Activated T-helper 1 cell treated with anti-CD3 and anti-CD28 coated beads, Interleukin-12 subunit alpha, Interleukin-12 subunit beta, Interleukin-2, Interleukin-4 antibody, amounts not matched to agents 30 ng/mL and 10 ng/mL and 1 ng/mL, durations not matched to agents 14 hours and 24 hours and 36 hours (primary cell): ENCODE measurements at regions of chr9 and their contacts with region 1.

Region 1: DNA sequence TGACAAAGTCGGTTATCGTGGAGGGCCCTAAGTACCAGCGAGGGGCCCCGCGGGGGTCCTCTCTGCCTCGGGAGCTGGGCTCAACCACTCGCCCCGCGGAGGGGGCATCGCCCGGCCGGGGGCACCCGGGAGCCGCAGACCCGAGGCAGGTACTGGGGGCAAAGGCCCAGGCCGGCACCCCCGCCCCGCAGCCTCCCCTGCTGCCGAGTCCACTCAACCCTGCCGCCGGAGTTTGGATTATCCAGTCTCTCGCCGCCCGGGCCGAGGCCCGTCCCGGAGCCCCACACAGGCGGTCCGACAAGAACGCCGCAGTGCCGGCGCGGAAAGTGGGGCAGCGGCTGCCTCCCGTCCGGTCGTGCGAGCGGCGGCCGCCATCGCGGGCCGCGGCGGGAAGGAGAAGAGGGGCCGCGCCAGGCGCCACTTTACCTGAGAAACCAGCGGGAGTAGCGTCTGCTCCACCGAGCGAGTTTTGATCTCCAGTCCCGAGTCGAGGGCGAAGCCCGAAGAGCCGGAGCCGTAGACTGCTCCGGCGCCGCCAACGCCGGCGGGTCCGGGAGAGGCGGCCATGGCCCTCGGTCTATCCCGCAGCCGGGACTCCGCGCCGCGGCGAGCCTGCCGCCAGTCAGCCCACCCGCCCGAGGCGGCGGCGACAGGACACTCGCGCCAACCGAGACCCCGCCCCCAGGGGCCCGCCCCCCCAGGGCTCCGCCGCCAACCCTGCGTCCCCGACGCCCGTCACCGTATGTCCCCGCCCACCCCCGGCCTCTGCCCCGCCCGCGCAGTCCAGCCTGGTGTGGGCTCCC is at the start of gene CTNNAL1:
- DNase-seq: peak; percentile 82
- H3K4me3 Mint-ChIP-seq: peak within 1 kb of the TSS; percentile 95
- H3K27ac Mint-ChIP-seq: peak within 1 kb of the TSS; percentile 94
- H3K4me1 Mint-ChIP-seq: peaks cover 39% of the 10 kb centered on the region
- H3K27me3 Mint-ChIP-seq: peaks cover 2% of the 10 kb centered on the region
- total RNA-seq, gene CTNNAL1: 24.8 and 25.1 TPM in 2 replicates

Region 2: GRCh38 chr9:108933718-108934322 is 79.3 kb before region 1 on chr9 and contains the start of gene ELP1:
- intact Hi-C with region 1: loop called (anchors 1 kb)
- DNase-seq: peak; percentile 90
- H3K4me3 Mint-ChIP-seq: peak within 1 kb of the TSS; percentile 95
- H3K27ac Mint-ChIP-seq: peak within 1 kb of the TSS; percentile 95
- H3K4me1 Mint-ChIP-seq: peaks cover 23% of the 10 kb centered on the region
- H3K27me3 Mint-ChIP-seq: no peaks in the 10 kb centered on the region
- total RNA-seq, gene ELP1: 31.6 and 35.2 TPM in 2 replicates

Region 3: DNA sequence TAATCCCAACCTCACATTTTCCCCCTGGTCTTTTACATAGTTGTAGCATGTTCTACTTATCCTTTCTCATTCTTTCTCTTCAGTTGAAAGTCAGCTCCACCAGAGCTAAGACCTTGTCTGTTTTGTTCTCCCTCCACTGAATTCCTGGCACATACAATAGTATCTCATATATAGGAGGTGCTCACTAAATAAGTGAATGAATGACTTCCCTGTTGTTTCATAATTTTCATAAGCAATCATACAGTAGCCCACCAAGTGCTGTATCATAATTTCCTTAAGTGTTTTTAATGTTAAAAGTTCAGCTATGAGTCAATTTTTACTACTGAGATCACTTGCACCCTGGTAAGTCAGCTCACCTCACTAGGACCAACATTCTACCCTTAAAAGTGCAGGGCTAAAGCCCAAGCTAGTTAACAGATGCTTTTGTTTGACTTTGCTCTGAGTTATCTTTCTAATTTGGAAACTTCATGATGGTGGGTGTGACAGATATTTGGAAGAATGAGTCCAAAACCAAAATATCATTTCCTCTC is 79.0 kb after region 1 on chr9:
- intact Hi-C with region 1: loop called (anchors 1 kb)
- DNase-seq: no peak
- H3K4me3 Mint-ChIP-seq: no peak overlapping the region
- H3K27ac Mint-ChIP-seq: peak overlapping the region; percentile 82
- H3K4me1 Mint-ChIP-seq: peaks cover 47% of the 10 kb centered on the region
- H3K27me3 Mint-ChIP-seq: no peaks in the 10 kb centered on the region

Region 4: DNA sequence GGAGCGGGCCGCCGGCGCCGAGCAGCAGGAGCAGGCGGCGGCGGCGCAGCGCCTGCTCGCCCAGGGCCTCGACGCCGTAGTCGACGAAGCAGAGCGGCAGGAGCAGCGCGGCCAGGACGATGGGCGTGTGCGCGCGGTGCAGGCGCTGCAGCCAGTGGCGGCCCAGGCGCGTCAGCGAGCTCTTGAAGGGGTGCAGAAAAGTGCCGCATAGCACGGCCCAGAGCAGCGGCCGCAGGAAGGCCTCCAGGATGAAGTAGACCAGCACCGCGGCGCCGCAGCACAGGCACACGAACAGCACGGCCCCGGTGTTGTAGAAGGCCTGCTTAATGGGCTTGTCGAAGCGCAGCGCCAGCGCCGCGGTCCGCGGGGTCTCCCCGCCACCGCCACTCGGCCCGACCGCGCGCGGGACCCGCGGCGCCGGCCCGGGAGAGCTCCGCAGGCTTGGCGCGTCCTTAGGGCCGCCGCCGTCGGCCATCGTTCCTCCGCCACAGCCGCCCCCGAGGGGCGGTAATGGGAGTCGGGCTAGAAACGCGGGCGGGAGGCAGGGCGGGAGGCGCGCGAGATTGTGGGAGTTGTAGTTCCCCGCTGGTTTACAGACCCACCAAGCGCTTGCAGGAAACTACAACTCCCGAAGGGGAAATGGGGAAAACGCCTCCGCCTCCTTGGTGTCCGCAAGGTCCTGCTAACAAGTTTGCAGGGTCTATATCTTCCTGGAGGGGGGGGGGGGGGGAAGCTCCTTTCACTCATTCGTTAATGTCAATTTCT is 106.5 kb after region 1 on chr9 and contains the start of gene TMEM245:
- intact Hi-C with region 1: loop called (anchors 1 kb)
- DNase-seq: peak; percentile 91
- H3K4me3 Mint-ChIP-seq: peak within 1 kb of the TSS; percentile 95
- H3K27ac Mint-ChIP-seq: peak within 1 kb of the TSS; percentile 87
- H3K4me1 Mint-ChIP-seq: peaks cover 33% of the 10 kb centered on the region
- H3K27me3 Mint-ChIP-seq: no peaks in the 10 kb centered on the region
- total RNA-seq, gene TMEM245: 26.9 and 29.4 TPM in 2 replicates

Region 5: DNA sequence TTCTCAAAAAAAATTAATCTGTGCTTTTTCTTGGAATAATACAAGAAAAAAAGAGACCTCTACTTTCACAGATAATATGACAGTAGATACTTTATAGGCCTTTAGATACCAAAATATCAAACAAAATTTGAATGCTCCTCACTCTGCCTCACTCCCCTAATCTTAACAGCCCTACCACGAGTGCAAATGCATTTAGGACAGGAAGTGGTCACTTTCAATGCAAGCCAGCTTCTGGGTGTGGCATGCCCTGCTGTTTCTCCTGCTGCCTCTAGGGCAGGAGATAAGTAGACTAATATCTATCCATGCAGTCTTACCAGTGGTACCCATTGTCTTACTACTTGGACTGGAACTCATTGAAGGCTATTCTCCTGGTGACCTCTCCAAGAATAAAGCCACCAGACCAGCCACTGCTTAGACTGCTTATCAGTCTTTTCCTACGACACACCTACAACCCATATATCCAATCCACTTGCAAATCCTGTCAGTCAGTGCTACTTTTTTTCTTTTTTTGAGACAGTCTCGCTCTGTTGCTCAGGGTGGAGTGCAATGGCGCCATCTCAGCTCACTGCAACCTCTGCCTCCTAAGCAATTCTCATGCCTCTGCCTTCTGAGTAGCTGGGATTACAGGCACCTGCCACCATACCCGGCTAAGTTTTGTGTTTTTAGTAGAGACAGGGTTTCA is 130.9 kb after region 1 on chr9:
- intact Hi-C with region 1: no loop called
- DNase-seq: no peak
- H3K4me3 Mint-ChIP-seq: no peak overlapping the region
- H3K27ac Mint-ChIP-seq: no peak overlapping the region
- H3K4me1 Mint-ChIP-seq: peaks cover 7% of the 10 kb centered on the region
- H3K27me3 Mint-ChIP-seq: peaks cover 8% of the 10 kb centered on the region

Region 6: GRCh38 chr9:109469646-109470358 is 456.7 kb after region 1 on chr9:
- intact Hi-C with region 1: loop called (anchors 2 kb)
- DNase-seq: peak; percentile 63
- H3K4me3 Mint-ChIP-seq: no peak overlapping the region
- H3K27ac Mint-ChIP-seq: peak overlapping the region; percentile 34
- H3K4me1 Mint-ChIP-seq: peaks cover 47% of the 10 kb centered on the region
- H3K27me3 Mint-ChIP-seq: peaks cover 19% of the 10 kb centered on the region